ENCODE measurements at regions of chr15 and their contacts with region 1.

Region 1: DNA sequence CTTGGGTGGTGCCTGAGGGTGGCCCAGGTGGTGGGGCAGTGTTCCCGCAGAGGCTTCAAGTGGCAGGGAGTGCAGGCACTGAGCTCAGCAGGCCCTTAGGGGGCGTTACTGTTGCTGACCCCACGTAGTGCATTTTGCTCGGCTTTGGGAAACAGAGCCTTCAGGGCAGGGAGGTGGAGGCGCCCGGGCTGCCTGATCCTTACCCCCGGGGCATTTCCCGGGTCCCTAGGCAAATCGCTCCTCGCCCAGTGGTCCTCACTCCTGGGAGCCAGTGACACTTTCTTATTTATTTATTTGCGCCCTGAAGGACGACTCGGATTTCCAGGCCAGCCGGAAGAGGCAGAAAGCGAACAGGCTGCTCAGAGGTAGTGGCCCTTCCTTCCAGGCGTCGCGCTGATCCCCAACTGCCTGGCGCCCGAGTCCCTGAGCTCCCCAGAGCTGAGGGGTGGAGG is 10.1 kb upstream of the FOXB1 start:
- DNase-seq: peak in 1 of 2 experiments; percentile 74
- H3K4me3 ChIP-seq: peak overlapping the region; percentile 31 to 63 (median 58)
- H3K27ac ChIP-seq: no peak overlapping the region
- H3K4me1 ChIP-seq: peaks cover 5 to 23% (median 15%) of the 10 kb centered on the region in 4 experiments; a peak in 6 of 7 replicates
- H3K27me3 ChIP-seq: peaks cover 0 to 34% (median 17%) of the 10 kb centered on the region in 4 experiments; a peak in 6 of 7 replicates
- CTCF ChIP-seq: peak; percentile 76 to 82 (median 77)
- EP300 ChIP-seq: no peak
- POLR2A ChIP-seq: no peak
- RAD21 ChIP-seq: peak; percentile 51 to 62

Region 2: GRCh38 chr15:59741274-59741906 is 252.6 kb before region 1 on chr15:
- CTCF ChIA-PET with region 1: interaction called, 15 read pairs
- POLR2A ChIA-PET with region 1: no interaction called
- DNase-seq: no peak
- H3K4me3 ChIP-seq: no peak overlapping the region
- H3K27ac ChIP-seq: no peak overlapping the region
- H3K4me1 ChIP-seq: no peaks in the 10 kb centered on the region
- H3K27me3 ChIP-seq: no peaks in the 10 kb centered on the region
- CTCF ChIP-seq: peak in 2 of 3 experiments; percentile 62 to 73; a peak in 3 of 4 replicates
- EP300 ChIP-seq: no peak
- POLR2A ChIP-seq: no peak
- RAD21 ChIP-seq: peak; percentile 77 to 83

Region 3: DNA sequence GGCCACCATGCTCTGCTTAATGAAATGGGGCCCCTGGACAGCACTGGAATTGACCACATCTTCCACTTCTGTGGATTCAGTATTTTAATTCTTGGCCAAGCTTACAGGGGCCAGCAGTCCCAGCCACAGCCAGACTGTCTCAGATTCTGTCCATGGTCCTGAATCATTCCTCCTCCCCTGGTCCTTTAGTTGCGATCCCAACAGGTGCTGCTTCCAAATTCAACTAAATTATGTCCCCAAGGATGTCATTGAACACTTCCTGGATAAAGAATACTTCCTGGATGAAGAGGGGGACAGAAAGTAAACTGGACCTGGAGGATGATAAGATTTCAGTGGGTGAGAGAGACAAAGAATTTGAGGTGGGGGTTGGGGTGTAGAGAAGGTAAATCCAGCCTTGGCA is 101.0 kb before region 1 on chr15:
- CTCF ChIA-PET with region 1: no interaction called
- POLR2A ChIA-PET with region 1: no interaction called
- DNase-seq: no peak
- H3K4me3 ChIP-seq: no peak overlapping the region
- H3K27ac ChIP-seq: no peak overlapping the region
- H3K4me1 ChIP-seq: no peaks in the 10 kb centered on the region
- H3K27me3 ChIP-seq: no peaks in the 10 kb centered on the region
- CTCF ChIP-seq: no peak
- EP300 ChIP-seq: no peak
- POLR2A ChIP-seq: no peak
- RAD21 ChIP-seq: 0 out of 4 replicates have a peak, but pooled peaks of 1 of the 2 experiments have one; percentile 1

Region 4: GRCh38 chr15:59941612-59942011 is 52.4 kb before region 1 on chr15:
- CTCF ChIA-PET with region 1: interaction called, 12 read pairs
- POLR2A ChIA-PET with region 1: no interaction called
- DNase-seq: no peak
- H3K4me3 ChIP-seq: no peak overlapping the region
- H3K27ac ChIP-seq: no peak overlapping the region
- H3K4me1 ChIP-seq: peaks cover 0 to 9% (median 4%) of the 10 kb centered on the region in 4 experiments; a peak in 5 of 7 replicates
- H3K27me3 ChIP-seq: no peaks in the 10 kb centered on the region
- CTCF ChIP-seq: no peak
- EP300 ChIP-seq: no peak
- POLR2A ChIP-seq: no peak
- RAD21 ChIP-seq: no peak

Region 5: DNA sequence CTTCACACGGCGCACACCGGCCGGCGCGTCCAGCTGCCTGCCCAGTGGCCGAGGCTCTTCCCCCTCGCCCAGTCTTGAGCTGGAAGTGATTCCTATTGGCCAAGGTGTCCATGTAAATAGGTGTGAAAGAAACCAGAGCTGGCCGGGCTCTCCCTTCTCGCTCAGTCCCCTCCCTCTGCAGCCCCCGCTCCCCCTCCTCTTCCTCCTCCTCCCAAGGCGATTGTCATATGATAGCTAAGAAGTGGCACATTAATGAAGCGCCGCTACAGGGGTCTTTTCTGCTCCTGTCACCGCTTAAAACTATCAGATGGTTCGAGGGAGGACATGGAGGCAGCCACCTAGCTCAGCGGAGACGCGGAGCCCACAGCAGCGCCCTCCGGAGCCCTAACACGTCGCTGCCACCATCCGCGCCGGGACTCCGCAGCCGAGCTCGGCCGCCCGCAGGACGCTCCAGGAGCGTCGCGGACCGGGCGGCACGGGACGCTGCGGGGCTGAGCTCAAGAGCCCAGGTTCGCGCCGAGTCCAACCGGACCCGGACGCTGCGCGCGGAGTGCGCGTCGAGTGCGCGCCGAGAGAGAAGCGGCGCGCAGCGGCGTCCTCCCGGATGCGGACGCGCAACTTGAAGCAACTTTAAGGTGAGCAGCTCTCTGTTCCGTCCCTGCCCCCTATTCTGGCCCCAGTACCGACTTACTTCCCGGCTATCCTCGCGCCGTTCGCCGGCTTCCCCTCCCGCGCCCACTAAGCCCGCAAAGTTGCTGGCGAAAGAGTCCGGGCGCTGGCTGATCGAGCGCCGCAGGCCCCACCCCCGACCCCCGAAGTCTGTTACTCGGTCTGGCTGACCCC is 10.3 kb after region 1 on chr15 and contains the start of gene FOXB1:
- CTCF ChIA-PET with region 1: interaction called, 33 read pairs
- POLR2A ChIA-PET with region 1: interaction called, 24 read pairs
- DNase-seq: peak in 1 of 2 experiments; percentile 79
- H3K4me3 ChIP-seq: peak within 1 kb of the TSS; percentile 54 to 74 (median 62)
- H3K27ac ChIP-seq: no peak within 1 kb of the TSS
- H3K4me1 ChIP-seq: peaks cover 14 to 42% (median 24%) of the 10 kb centered on the region in 4 experiments
- H3K27me3 ChIP-seq: peaks cover 25 to 65% (median 55%) of the 10 kb centered on the region in 4 experiments; a peak in 6 of 7 replicates
- CTCF ChIP-seq: peak in 2 of 3 experiments; percentile 27 to 36; a peak in 3 of 4 replicates
- EP300 ChIP-seq: no peak
- POLR2A ChIP-seq: no peak
- RAD21 ChIP-seq: peak in 1 of 2 experiments; percentile 29; a peak in 1 of 4 replicates
- total RNA-seq, gene FOXB1: 1.5 and 2.1 TPM in 2 replicates

Region 6: GRCh38 chr15:60059186-60059585 is 65.2 kb after region 1 on chr15:
- CTCF ChIA-PET with region 1: no interaction called
- POLR2A ChIA-PET with region 1: no interaction called
- DNase-seq: no peak
- H3K4me3 ChIP-seq: no peak overlapping the region
- H3K27ac ChIP-seq: no peak overlapping the region
- H3K4me1 ChIP-seq: no peaks in the 10 kb centered on the region
- H3K27me3 ChIP-seq: no peaks in the 10 kb centered on the region
- CTCF ChIP-seq: no peak
- EP300 ChIP-seq: no peak
- POLR2A ChIP-seq: no peak
- RAD21 ChIP-seq: no peak

Region 7: GRCh38 chr15:60079210-60079609 is 85.2 kb after region 1 on chr15:
- CTCF ChIA-PET with region 1: interaction called, 15 read pairs
- POLR2A ChIA-PET with region 1: interaction called, 4 read pairs
- DNase-seq: no peak
- H3K4me3 ChIP-seq: no peak overlapping the region
- H3K27ac ChIP-seq: no peak overlapping the region
- H3K4me1 ChIP-seq: peaks cover 0 to 18% (median 17%) of the 10 kb centered on the region in 4 experiments
- H3K27me3 ChIP-seq: no peaks in the 10 kb centered on the region
- CTCF ChIP-seq: peak in 2 of 3 experiments; percentile 30 to 66; a peak in 2 of 4 replicates
- EP300 ChIP-seq: no peak
- POLR2A ChIP-seq: no peak
- RAD21 ChIP-seq: peak; percentile 48 to 62

Region 8: GRCh38 chr15:60128000-60128376 is 134.0 kb after region 1 on chr15:
- CTCF ChIA-PET with region 1: interaction called, 10 read pairs
- POLR2A ChIA-PET with region 1: no interaction called
- DNase-seq: no peak
- H3K4me3 ChIP-seq: peak overlapping the region; percentile 19 to 47 (median 24); a peak in 4 of 8 replicates
- H3K27ac ChIP-seq: no peak overlapping the region
- H3K4me1 ChIP-seq: peaks cover 0 to 14% (median 7%) of the 10 kb centered on the region in 4 experiments; a peak in 5 of 7 replicates
- H3K27me3 ChIP-seq: no peaks in the 10 kb centered on the region
- CTCF ChIP-seq: no peak
- EP300 ChIP-seq: no peak
- POLR2A ChIP-seq: no peak
- RAD21 ChIP-seq: no peak